ENCODE measurements at regions of chr3 and their contacts with region 1.

Region 1: GRCh38 chr3:58161435-58162398 is 49.1 kb downstream of the DNASE1L3 start:
- DNase-seq: peak; percentile 98
- ATAC-seq: peak; percentile 47
- H3K4me3 ChIP-seq: no peak overlapping the region
- H3K27ac ChIP-seq: peak overlapping the region; percentile 3; the same call in 1 of the 2 replicates
- H3K4me1 ChIP-seq: peaks cover 25% of the 10 kb centered on the region
- H3K27me3 ChIP-seq: no peaks in the 10 kb centered on the region
- CTCF ChIP-seq: no peak
- POLR2A ChIP-seq: no peak
- RAD21 ChIP-seq: no peak

Region 2: DNA sequence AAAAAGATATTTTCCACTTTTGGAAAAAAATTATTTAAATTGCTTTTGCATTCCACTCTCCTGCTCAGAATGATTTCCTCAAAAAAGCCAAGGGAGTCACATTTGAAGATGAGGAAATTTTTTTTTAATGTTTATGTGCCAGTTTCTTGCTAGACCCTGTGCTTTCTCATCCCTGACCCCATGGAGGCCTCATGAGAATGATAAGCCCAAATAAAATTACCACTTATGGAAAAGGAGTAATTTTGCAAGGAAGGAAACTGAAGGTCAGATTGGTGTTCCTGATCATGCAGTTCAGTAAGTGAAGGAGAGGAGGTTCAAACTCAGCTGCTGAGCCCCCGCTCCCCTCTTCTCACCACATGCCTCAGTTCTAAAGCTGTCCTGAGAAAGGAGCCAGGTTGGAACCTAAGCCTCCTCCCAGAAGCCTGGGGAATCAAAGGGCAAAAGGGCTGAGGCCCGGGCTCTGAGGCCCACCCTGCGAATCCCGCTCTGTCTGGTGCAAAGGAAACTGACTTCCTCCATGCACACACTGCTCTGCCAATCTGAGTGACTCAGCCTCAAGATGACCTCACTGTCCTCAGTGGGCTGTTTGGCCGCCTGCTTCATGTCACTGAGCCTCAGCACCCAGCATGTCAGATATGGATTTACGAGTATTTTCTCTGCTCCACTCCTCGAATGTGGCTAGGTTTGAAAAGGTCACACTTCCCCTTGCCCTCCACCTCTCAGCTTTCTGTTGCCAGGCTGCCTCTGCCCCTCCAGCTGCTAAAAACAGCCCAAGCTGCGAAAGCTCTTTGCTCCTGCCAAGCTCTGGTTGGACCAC is 210.4 kb before region 1 on chr3:
- CTCF ChIA-PET with region 1: no interaction called
- POLR2A ChIA-PET with region 1: no interaction called
- dilution Hi-C with region 1: no loop called
- in situ Hi-C with region 1: no loop called
- intact Hi-C with region 1: loop called (anchors 5 kb)
- DNase-seq: peak; percentile 89
- ATAC-seq: peak; percentile 77
- H3K4me3 ChIP-seq: no peak overlapping the region
- H3K27ac ChIP-seq: peak overlapping the region; percentile 88
- H3K4me1 ChIP-seq: peaks cover 19% of the 10 kb centered on the region
- H3K27me3 ChIP-seq: no peaks in the 10 kb centered on the region
- CTCF ChIP-seq: no peak
- POLR2A ChIP-seq: no peak
- RAD21 ChIP-seq: no peak

Region 3: DNA sequence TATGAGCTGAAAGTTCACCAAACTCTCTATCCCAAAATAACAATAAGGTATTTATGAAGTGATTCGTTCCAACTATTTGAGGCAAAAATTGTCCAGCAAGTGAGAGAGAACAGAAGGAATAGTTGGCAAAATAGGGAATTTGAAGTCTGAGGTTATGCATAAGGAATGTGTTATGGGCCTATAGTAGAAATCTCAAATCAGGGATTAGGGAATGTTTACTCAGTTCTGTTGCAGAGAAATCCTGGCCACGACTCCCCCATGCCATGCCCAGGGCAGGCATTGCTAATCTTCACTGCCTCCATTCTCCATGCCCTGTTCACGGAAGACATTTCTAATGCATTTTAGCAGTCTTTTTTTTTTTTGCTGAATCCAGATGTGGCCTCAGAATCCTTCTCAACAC is 94.9 kb before region 1 on chr3:
- CTCF ChIA-PET with region 1: no interaction called
- POLR2A ChIA-PET with region 1: no interaction called
- dilution Hi-C with region 1: no loop called
- in situ Hi-C with region 1: no loop called
- intact Hi-C with region 1: loop called (anchors 5 kb)
- DNase-seq: peak; percentile 72
- ATAC-seq: peak; percentile 84
- H3K4me3 ChIP-seq: no peak overlapping the region
- H3K27ac ChIP-seq: no peak overlapping the region
- H3K4me1 ChIP-seq: peaks cover 36% of the 10 kb centered on the region
- H3K27me3 ChIP-seq: no peaks in the 10 kb centered on the region
- CTCF ChIP-seq: no peak
- POLR2A ChIP-seq: no peak
- RAD21 ChIP-seq: no peak

Region 4: GRCh38 chr3:58188921-58189451 is 27.3 kb after region 1 on chr3:
- CTCF ChIA-PET with region 1: no interaction called
- POLR2A ChIA-PET with region 1: no interaction called
- dilution Hi-C with region 1: no loop called
- in situ Hi-C with region 1: no loop called
- intact Hi-C with region 1: no loop called
- DNase-seq: no peak
- ATAC-seq: no peak
- H3K4me3 ChIP-seq: no peak overlapping the region
- H3K27ac ChIP-seq: no peak overlapping the region
- H3K4me1 ChIP-seq: no peaks in the 10 kb centered on the region
- H3K27me3 ChIP-seq: peaks cover 2% of the 10 kb centered on the region; the same call in 1 of the 2 replicates
- CTCF ChIP-seq: no peak
- POLR2A ChIP-seq: no peak
- RAD21 ChIP-seq: no peak